Sciatic nerve (tissue), 2 donors: ENCODE measurements at regions of chr3 and their contacts with region 1.

Region 1: DNA sequence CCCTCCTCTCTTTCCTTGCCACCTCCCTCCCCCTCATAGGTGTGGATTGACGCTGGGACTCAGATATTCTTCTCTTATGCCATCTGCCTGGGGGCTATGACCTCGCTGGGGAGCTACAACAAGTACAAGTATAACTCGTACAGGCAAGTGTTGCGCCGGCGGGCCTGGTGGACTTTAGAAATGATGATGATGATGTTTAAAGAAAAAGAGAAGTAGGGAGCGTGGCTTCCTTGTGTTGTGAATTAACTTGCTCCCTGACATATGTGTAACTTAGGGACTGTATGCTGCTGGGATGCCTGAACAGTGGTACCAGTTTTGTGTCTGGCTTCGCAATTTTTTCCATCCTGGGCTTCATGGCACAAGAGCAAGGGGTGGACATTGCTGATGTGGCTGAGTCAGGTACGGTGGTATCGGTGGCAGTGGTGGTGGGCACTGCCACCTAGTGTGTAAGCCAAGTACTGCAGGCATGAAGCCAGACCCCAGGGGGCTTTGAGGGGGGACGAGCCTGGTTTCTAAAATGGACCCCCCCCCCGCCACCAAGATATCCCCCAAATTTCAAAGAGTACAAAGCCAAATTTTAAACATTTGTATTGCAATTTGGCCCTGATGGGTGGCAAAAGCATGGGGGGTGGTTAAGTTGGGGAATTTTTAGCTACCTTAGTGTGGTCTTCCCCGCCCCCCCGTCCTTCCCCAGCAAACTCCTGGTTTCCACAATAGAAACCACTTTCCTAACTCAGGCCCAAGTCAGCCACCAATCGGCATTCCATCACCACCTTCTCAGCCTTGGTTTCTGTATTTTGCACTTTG is 65.6 kb downstream of the SLC6A6 start:
- DNase-seq: peak; percentile 66
- ATAC-seq: peak; percentile 72

Region 2: GRCh38 chr3:14203521-14204079 is 264.4 kb before region 1 on chr3:
- intact Hi-C with region 1: loop called (anchors 5 kb)
- DNase-seq: peak; percentile 72
- ATAC-seq: peak; percentile 83

Region 3: GRCh38 chr3:14261229-14261628 is 206.8 kb before region 1 on chr3:
- intact Hi-C with region 1: loop called (anchors 5 kb)
- DNase-seq: peak; percentile 92
- ATAC-seq: peak; percentile 87

Region 4: GRCh38 chr3:14480207-14481025 is 12.4 kb after region 1 on chr3:
- intact Hi-C with region 1: no loop called
- DNase-seq: no peak
- ATAC-seq: peak; percentile 71

Region 5: GRCh38 chr3:14508961-14509795 is 41.2 kb after region 1 on chr3:
- intact Hi-C with region 1: no loop called
- DNase-seq: peak; percentile 83
- ATAC-seq: peak; percentile 69

Region 6: DNA sequence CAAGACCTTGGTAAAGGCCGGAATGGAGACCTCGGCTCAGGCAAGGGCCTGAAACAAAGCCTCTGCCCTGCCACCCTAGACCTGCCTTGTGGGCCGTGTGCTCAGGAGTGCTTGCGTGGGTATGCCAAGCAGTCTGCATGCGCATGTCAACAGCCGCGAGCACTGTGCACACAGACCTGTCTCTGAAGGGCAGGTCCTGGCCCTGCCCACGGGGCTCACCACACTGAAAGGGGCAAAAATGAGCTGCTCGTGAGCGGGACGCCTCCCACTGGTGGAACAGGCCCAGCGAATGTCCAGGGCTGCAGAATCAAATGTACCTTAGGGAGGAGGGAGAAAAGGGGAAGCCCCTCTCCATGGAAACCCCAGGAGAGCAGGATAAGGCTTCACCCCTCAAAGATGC is 306.4 kb after region 1 on chr3:
- intact Hi-C with region 1: no loop called
- DNase-seq: no peak
- ATAC-seq: no peak